Sciatic nerve (tissue), 2 donors: ENCODE measurements at regions of chr4 and their contacts with region 1.

Region 1: DNA sequence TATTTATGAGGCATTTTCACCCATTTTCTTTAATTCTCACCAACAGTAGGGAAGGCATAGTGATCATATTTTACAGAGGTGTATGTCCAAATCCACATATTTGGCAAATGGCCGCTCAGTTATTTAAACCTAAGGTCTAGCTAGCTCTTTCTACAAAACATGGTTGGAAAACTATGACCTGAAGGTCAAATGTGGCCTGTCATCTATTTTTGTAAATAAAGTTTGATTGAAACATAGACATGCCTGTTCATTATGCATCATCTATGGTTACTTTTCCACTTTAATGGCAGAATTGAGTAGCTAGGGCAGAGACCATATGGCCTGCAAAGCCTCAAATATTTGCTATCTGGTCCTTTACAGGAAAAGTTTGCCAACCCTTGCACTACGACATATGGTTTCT is 44.2 kb downstream of the GBA3 start:
- DNase-seq: no peak
- ATAC-seq: no peak

Region 2: DNA sequence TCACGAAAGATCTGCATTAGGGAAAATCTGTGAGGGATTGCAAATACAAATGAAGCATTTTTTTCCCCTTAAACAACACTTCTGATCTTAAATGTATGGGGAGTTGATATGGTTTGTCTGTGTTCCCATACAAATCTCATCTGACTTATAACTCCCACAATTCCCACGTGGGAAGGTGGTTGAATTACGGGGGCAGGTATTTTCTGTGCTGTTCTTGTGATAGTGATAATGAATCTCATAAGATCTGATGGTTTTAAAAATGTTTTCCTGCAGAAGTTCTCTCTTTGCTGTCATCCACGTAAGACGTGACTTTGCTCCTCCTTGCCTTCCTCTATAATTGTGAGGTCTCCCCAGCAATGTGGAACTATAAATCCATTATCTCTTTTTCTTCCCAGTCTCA is 681.0 kb before region 1 on chr4:
- intact Hi-C with region 1: loop called (anchors 2 kb)
- DNase-seq: no peak
- ATAC-seq: no peak

Region 3: DNA sequence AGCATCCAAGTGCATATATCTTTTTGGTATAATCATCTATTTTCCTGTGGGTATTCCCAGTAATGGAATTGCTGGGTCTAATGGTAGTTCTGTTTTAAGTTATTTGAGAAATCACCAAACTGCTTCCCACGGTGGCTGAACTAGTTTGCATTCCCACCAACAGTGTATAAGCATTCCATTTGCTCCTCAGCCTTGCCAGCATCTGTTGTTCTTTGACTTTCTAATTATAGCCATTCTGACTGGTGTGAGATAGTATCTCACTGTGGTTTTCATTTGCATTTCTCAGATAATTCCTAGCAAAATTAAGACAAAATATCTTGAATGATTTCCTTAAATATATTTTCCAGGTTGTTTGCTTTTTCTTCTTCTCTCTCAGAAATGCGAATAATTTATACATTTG is 296.9 kb after region 1 on chr4:
- intact Hi-C with region 1: no loop called
- DNase-seq: no peak
- ATAC-seq: no peak

Region 4: DNA sequence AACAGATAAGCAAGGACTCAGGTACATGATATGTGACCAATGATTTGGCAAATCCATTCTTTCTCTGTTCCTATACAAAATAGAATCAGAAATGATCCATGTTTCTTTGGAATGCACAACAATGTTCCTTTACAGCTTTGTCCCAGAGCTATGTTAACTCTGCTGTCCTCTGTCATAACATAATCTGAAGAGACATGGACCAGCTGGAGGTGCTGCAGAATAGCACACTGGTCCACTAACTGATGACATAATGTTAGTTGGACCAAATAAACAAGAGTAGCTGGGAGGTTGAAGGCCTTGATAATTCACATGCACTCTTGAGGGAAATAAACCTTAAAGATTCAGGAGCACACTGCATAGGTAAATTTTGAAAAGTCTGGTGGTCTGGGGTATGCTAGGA is 1870.4 kb after region 1 on chr4:
- intact Hi-C with region 1: no loop called
- DNase-seq: no peak
- ATAC-seq: peak; percentile 42